ENCODE measurements at regions of chr17 and their contacts with region 1.

Region 1: DNA sequence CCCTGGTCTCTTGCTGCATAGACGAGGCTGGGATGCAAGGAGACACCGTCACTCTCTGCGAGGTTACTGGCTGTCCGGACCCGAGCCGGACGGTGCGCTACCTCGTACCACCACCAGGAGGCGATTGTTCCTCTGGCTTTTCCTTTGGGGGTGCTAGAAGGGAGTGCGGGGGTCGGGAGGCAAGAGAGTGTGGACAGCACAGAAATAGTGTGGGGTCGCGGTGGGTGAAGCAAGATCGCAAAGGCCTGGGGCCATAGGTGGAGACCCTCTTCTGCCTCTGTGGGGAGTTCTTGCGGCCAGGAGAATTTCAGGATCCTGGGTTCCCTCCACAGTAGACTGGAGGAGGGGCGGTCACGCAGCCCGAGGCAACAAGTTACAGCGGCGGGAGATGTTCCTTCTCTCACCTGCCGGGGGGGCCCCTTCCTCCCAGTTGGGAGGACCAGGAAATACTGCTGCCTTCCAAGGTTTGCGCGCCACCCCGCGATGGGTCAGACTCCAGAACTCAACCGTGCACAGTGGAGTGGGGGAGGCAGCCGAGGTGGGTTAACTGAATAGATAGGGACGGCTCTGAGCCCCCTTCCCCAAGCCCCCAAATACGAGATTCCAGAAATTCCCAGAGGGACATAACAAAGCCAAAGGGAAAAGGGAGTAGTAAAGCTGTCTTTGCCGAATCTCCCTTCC is 6.9 kb downstream of the PHOSPHO1 start:
- DNase-seq: peak; percentile 74
- H3K4me3 Mint-ChIP-seq: peak overlapping the region; percentile 36
- H3K27ac Mint-ChIP-seq: no peak overlapping the region
- H3K4me1 Mint-ChIP-seq: peaks cover 59% of the 10 kb centered on the region
- H3K27me3 Mint-ChIP-seq: peaks cover 52% of the 10 kb centered on the region

Region 2: DNA sequence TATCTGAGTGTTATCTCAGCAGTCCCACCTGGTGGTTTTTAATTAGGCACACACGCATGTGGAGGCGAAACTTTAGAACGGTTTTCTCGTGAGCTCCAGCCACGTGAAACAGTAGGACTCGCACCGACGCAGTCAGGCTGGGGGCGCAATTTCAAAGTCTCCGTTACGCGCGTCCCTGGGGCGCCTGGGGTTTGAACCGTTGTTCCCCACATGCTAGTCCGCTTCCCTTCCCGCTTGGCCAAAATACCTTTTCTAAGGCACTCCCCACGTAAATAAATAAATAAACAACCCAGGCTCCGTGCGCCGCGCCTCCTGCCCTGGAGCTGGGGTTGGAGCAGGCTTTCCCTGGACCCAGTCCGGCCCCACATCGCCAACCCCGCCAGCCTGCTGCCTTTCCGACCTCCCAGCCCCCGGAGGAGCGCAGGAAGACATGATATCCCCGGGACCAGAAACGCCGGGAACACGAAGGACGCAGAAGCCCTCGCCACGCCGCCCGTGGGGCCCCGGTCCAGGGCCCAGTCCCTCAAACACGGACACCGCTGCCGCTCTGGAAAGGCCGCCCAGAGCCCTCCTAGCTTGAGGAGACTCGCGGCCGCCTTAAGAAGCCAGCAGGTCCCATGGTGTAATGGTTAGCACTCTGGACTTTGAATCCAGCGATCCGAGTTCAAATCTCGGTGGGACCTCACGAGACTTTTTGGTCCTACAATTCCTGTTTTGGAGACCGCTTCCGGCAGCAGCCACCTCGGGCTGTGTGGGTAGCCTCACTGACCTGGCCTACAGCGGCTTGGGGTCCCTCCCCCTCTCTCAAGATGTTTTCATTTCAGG is 31.5 kb before region 1 on chr17:
- CTCF ChIA-PET with region 1: interaction called, 21 read pairs
- DNase-seq: peak; percentile 92
- H3K4me3 Mint-ChIP-seq: peak overlapping the region; percentile 84
- H3K27ac Mint-ChIP-seq: peak overlapping the region; percentile 100
- H3K4me1 Mint-ChIP-seq: peaks cover 54% of the 10 kb centered on the region
- H3K27me3 Mint-ChIP-seq: peaks cover 18% of the 10 kb centered on the region

Measured in activated naive CD4-positive, alpha-beta T cell treated with anti-CD3 and anti-CD28 coated beads, Interleukin-2, amount 10 ng/mL, durations not matched to agents 7 days and 5 days (primary cell).